HAP-1 (cell line): ENCODE measurements at regions of chr2 and their contacts with region 1.

Region 1: DNA sequence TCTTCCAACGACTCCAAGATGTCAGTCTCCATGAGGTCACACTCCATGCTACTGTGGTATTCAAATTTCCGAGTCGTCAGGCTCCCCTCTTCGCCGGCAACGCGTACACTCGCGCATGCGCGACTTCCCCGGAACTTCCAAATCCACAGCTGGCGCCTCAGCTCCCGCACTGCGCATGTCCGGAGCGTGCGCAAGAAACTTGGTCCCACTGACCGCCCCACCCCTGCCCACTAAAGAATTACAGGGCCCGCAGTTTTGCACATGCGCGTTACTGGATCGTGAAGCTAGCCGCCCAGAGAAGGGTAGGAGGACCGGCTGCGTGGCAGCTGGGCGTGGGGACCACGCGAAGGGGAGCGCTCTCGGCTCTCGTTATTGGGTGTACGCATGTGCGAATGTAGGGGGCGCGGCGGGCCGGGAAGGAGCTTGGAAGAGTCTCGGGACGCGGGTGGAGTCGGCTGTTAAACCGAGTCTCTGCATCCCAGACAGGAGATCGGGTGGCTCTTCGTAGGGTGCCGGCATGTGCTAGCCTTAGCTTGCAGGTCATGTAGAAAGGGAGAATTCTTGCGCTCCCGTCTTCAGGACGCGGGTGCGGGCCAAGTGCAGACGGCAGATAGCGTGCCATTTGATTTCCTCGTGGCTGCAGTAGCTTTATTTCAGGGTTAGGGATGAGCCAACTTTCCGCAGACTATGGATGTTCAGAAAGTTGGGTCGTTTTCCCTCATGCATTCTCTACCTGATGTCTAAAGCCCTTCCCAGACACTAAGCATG is at the start of gene FAM98A:
- DNase-seq: peak; percentile 92 to 99
- H3K4me3 ChIP-seq: peak within 1 kb of the TSS; percentile 92
- H3K4me1 ChIP-seq: peaks cover 17% of the 10 kb centered on the region
- H3K27me3 ChIP-seq: no peaks in the 10 kb centered on the region

Region 2: DNA sequence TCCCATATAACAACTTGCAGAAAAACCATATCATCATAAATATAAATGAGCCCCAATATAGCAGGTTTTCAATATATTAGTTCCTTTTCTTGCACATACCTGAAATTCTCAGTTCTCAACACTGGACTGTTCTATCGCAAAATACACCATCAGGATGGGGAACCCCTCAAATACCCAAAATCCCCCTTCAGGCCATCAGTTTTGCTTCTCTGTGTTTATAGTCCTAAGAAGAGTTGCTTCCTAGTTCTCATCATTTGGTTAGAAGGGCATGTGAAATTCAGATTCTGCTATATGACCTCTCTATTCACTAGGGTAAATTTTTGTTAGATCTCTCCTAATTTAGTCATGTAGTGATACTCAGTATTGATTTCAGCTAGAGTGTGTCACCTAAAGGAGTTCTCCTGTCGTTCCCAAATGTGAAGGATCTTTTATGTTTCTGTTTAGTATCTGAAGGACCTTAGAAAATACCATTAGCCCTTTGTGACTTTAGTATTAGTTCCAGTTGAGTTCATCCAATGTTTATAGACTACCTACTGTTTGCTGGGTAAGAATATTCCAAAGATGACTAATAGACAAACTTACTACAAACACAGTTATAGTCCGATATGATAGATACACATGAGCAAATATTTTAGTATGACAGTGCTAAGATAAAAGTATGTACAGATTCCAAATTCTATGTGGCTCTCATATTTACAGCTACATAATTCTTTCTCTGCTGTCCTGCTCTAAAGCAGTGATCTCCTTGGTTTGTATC is 855.7 kb before region 1 on chr2:
- in situ Hi-C with region 1: loop called (anchors 25 kb)
- DNase-seq: no peak
- H3K4me3 ChIP-seq: no peak overlapping the region
- H3K4me1 ChIP-seq: peaks cover 11% of the 10 kb centered on the region
- H3K27me3 ChIP-seq: no peaks in the 10 kb centered on the region

Region 3: GRCh38 chr2:32946314-32947075 is 652.9 kb before region 1 on chr2 and contains the start of gene LTBP1:
- in situ Hi-C with region 1: loop called (anchors 25 kb)
- DNase-seq: peak; percentile 18 to 70
- H3K4me3 ChIP-seq: peak within 1 kb of the TSS; percentile 28
- H3K4me1 ChIP-seq: peaks cover 13% of the 10 kb centered on the region
- H3K27me3 ChIP-seq: peaks cover 38% of the 10 kb centered on the region